Activated CD4-positive, alpha-beta T cell treated with anti-CD3 and anti-CD28 coated beads, Interleukin-2, amount 10 ng/mL, durations not matched to agents 7 days and 5 days (primary cell): ENCODE measurements at regions of chrX and their contacts with region 1.

Region 1: GRCh38 chrX:155612312-155613224 is at the start of gene TMLHE:
- DNase-seq: peak; percentile 60
- H3K4me3 Mint-ChIP-seq: peak within 1 kb of the TSS; percentile 84
- H3K27ac Mint-ChIP-seq: peak within 1 kb of the TSS; percentile 94
- H3K4me1 Mint-ChIP-seq: peaks cover 13% of the 10 kb centered on the region
- H3K27me3 Mint-ChIP-seq: no peaks in the 10 kb centered on the region
- total RNA-seq, gene TMLHE: 13.1 to 13.9 TPM

Region 2: GRCh38 chrX:155218777-155219176 is 393.8 kb before region 1 on chrX:
- CTCF ChIA-PET with region 1: no interaction called
- POLR2A ChIA-PET with region 1: interaction called, 12 read pairs
- DNase-seq: no peak
- H3K4me3 Mint-ChIP-seq: peak overlapping the region; percentile 4
- H3K27ac Mint-ChIP-seq: peak overlapping the region; percentile 32
- H3K4me1 Mint-ChIP-seq: peaks cover 23% of the 10 kb centered on the region
- H3K27me3 Mint-ChIP-seq: no peaks in the 10 kb centered on the region

Region 3: DNA sequence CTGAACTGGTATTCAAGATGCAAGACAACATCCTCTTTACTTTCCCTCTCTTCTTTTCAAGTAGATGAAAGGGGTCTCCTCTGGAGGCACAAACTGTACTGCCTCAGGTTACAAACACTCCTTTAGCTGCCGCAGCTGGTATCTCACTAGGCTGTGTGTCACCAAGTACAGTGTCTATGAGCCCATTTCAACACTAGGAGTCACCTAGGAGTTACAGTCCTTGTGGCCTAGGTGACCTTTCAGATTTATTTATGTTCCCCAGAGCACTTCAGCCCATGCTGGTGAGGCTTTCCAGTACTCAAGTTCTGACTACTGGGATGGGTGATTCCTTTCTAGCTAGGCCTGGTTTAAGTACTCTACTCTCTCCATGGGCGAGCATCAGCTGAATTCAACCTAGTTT is 32.6 kb after region 1 on chrX:
- CTCF ChIA-PET with region 1: no interaction called
- POLR2A ChIA-PET with region 1: no interaction called
- DNase-seq: no peak
- H3K4me3 Mint-ChIP-seq: no peak overlapping the region
- H3K27ac Mint-ChIP-seq: no peak overlapping the region
- H3K4me1 Mint-ChIP-seq: peaks cover 15% of the 10 kb centered on the region
- H3K27me3 Mint-ChIP-seq: no peaks in the 10 kb centered on the region